Endothelial cell of umbilical vein (primary cell): ENCODE measurements at regions of chr11 and their contacts with region 1.

Region 1: DNA sequence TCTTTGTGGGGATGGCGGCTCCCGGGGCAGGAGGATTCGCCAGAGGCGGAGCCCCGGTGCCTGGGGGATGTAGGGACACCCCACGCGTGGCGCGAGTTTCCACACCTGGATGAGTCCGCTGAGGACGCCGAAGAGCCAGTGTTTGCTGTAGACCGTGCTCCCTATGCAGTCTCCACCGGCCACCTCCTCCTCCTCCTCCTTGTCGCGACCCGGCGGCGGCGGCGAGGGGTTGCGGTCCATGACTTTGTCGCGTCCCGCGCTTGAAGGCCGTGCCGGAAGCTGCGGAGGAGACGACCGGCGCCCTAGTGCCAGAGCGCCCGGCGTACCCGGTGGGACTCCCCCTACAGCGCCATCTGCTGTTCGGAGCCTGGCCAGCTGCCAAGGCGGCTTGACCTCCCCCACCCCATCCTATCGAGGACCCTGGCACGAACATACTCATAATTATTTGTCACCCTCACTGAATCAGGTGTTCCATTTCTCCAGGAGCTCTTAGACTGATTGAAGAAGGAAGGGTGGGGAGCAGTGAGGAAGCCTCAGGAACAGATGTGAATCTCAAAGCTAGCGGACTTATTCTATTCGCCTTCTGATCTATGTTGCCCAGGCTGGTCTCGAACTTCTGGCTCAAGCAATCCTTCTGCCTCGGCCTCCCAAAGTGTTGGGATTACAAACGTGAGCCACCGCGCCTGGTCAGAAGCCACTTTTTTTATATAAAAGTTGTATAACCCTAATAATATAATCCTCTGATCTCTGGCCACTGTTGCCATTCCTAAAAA is at the start of gene SAAL1:
- DNase-seq: peak; percentile 81
- H3K4me3 ChIP-seq: peak within 1 kb of the TSS; percentile 50 to 94 (median 92)
- H3K27ac ChIP-seq: peak within 1 kb of the TSS; percentile 14
- H3K4me1 ChIP-seq: peaks cover 7% of the 10 kb centered on the region
- H3K27me3 ChIP-seq: peaks cover 2 to 11% of the 10 kb centered on the region in 2 experiments
- CTCF ChIP-seq: peak; percentile 76 to 85
- POLR2A ChIP-seq: peak; percentile 61
- total RNA-seq, gene SAAL1: 22.1 and 24.2 TPM in 2 replicates

Region 2: GRCh38 chr11:17991783-17992433 is 114.1 kb before region 1 on chr11:
- CTCF ChIA-PET with region 1: interaction called, 19 read pairs
- POLR2A ChIA-PET with region 1: no interaction called
- dilution Hi-C with region 1: no loop called
- intact Hi-C with region 1: loop called (anchors 1 kb)
- DNase-seq: peak; percentile 59
- H3K4me3 ChIP-seq: no peak overlapping the region
- H3K27ac ChIP-seq: no peak overlapping the region
- H3K4me1 ChIP-seq: no peaks in the 10 kb centered on the region
- H3K27me3 ChIP-seq: no peaks in the 10 kb centered on the region
- CTCF ChIP-seq: peak; percentile 68 to 70
- POLR2A ChIP-seq: no peak

Region 3: GRCh38 chr11:18012863-18013781 is 92.9 kb before region 1 on chr11 and contains the start of gene SERGEF:
- CTCF ChIA-PET with region 1: interaction called, 10 read pairs
- POLR2A ChIA-PET with region 1: no interaction called
- dilution Hi-C with region 1: no loop called
- intact Hi-C with region 1: loop called (anchors 1 kb)
- DNase-seq: peak; percentile 77
- H3K4me3 ChIP-seq: peak within 1 kb of the TSS; percentile 59 to 85 (median 62)
- H3K27ac ChIP-seq: peak within 1 kb of the TSS; percentile 2
- H3K4me1 ChIP-seq: peaks cover 9% of the 10 kb centered on the region
- H3K27me3 ChIP-seq: peaks cover 9 to 16% of the 10 kb centered on the region in 2 experiments
- CTCF ChIP-seq: no peak
- POLR2A ChIP-seq: peak; percentile 78
- total RNA-seq, gene SERGEF: 12.3 and 16.7 TPM in 2 replicates

Region 4: DNA sequence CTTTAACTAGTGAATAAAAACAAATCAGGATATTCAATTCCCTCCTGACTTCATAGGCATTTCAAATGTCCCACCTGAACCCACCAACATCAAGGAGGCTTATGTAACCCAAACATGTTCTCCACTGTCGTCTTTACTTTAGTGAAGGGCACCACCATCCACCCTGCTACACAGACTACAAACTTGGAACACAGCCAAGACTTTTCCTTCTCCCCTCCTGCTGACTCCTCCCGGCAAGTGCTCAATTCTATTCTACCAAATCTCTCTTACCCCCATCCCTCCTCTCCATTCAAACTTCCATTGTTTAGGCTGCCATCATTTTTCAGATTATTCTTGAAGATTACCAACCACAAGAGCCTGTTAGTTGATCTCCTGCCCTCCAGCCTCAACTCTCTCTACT is 24.4 kb before region 1 on chr11:
- CTCF ChIA-PET with region 1: interaction called, 11 read pairs
- POLR2A ChIA-PET with region 1: no interaction called
- dilution Hi-C with region 1: no loop called
- intact Hi-C with region 1: loop called (anchors 2 kb)
- DNase-seq: peak; percentile 5
- H3K4me3 ChIP-seq: no peak overlapping the region
- H3K27ac ChIP-seq: no peak overlapping the region
- H3K4me1 ChIP-seq: peaks cover 18% of the 10 kb centered on the region
- H3K27me3 ChIP-seq: no peaks in the 10 kb centered on the region
- CTCF ChIP-seq: no peak
- POLR2A ChIP-seq: no peak